ENCODE measurements at regions of chr17 and their contacts with region 1.

Region 1: GRCh38 chr17:29931231-29931932 is 1.4 kb upstream of the SSH2 start:
- DNase-seq: peak; percentile 81
- H3K4me3 ChIP-seq: peak overlapping the region in 3 of 4 donors; percentile 94 to 100 (median 97)
- H3K27ac ChIP-seq: peak overlapping the region in 3 of 4 donors; percentile 96 to 97 (median 96)
- H3K4me1 ChIP-seq: peaks cover 0 to 31% (median 25%) of the 10 kb centered on the region in 4 donors
- H3K27me3 ChIP-seq: no peaks in the 10 kb centered on the region
- CTCF ChIP-seq: peak; percentile 54 to 82 (median 82)
- EP300 ChIP-seq: no peak
- POLR2A ChIP-seq: no peak

Region 2: GRCh38 chr17:29579866-29580771 is 351.3 kb before region 1 on chr17:
- intact Hi-C with region 1: loop called (anchors 5 kb)
- DNase-seq: peak; percentile 91
- H3K4me3 ChIP-seq: no peak overlapping the region
- H3K27ac ChIP-seq: no peak overlapping the region
- H3K4me1 ChIP-seq: peaks cover 0 to 34% (median 27%) of the 10 kb centered on the region in 4 donors
- H3K27me3 ChIP-seq: no peaks in the 10 kb centered on the region
- CTCF ChIP-seq: peak; percentile 79 to 88 (median 88)
- EP300 ChIP-seq: no peak
- POLR2A ChIP-seq: no peak

Region 3: GRCh38 chr17:29622337-29623282 is 308.8 kb before region 1 on chr17 and contains the start of gene CORO6:
- intact Hi-C with region 1: loop called (anchors 10 kb)
- DNase-seq: peak; percentile 83
- H3K4me3 ChIP-seq: peak within 1 kb of the TSS; percentile 55 to 76 (median 65)
- H3K27ac ChIP-seq: peak within 1 kb of the TSS; percentile 77 to 92 (median 86)
- H3K4me1 ChIP-seq: peaks cover 0 to 58% (median 39%) of the 10 kb centered on the region in 4 donors
- H3K27me3 ChIP-seq: no peaks in the 10 kb centered on the region
- CTCF ChIP-seq: no peak
- EP300 ChIP-seq: no peak
- POLR2A ChIP-seq: peak in 1 of 2 donors; percentile 25
- total RNA-seq, gene CORO6: 23.9 to 94.4 (median 35.1) TPM

Region 4: DNA sequence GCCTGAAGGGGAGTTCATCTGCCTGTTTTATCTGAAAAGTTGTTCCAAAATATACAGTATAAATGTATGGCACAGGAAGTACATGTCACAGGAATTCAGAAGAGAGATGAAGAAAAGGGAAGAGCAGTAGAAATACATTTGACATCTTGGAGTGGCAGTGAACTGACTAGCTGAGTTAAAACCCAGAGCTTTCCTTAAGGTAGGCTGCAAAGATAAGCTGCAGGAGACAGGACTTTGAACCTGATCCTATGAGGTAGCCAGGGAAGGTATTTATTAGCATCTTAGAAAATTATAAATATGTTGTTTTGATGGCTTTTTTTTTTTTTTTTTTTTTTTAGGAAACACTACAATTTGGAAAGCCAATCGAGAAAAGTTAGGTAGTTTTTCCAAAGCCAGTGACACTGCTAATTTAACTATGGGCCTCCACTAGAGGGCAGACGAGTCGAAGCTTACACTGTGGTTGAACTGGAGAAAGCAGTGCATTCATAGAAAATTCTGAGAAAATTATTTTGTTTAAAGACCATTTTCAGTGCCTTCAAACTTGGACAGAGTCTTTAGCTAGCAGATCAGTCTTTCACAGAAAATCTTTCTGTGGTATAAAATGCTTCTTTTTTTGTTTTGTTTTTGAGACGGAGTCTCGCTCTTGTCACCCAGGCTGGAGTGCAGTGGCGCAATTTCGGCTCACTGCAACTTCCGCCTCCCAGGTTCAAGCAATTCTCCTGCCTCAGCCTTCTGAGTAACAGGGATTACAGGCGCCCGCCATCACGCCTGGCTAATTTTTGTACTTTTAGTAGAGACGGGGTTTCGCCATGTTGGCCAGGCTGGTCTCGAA is 123.6 kb before region 1 on chr17:
- intact Hi-C with region 1: loop called (anchors 1 kb)
- DNase-seq: no peak
- H3K4me3 ChIP-seq: no peak overlapping the region
- H3K27ac ChIP-seq: no peak overlapping the region
- H3K4me1 ChIP-seq: peaks cover 0 to 3% (median 0%) of the 10 kb centered on the region in 4 donors
- H3K27me3 ChIP-seq: no peaks in the 10 kb centered on the region
- CTCF ChIP-seq: peak in 3 of 4 experiments; percentile 48 to 69 (median 67)
- EP300 ChIP-seq: no peak
- POLR2A ChIP-seq: no peak

Measured in sigmoid colon (tissue), 7 donors.